BJ (cell line): ENCODE measurements at regions of chr7 and their contacts with region 1.

Region 1: DNA sequence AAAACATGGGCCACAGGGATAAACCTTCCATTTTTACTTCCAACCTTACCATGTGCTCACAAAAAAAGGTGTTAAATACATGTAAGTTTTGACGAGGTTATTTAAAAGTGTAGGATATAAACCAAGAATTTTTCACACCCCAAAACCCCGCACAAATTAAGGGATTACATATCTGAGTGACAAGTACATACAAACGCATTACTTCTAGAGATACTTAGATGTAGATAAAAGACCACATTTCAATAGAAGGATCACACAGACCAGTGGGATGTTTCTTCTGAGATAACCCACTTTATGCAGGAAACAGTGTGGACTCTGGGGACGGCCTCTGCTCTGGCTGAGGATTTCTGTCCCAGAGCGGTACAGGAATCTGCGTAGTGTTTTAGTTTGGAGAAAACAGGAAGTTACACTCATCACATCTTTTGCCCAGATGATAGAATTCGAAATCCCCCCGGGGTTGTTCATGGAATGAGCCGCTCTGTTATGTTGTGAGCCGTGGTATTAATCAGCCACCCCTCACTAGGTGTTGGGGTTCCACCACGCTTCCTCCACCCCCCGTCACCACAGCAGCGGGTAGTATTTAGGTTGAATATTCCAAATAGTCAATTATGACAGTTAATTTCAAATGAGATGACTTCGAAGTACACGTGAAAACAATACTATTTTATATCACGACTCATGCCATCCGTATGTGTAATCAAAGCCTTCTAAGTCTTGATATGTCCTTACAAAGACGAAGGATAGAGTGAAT is 1.3 kb upstream of the CUL1 start:
- DNase-seq: no peak
- H3K4me3 ChIP-seq: peak overlapping the region; percentile 87
- H3K27me3 ChIP-seq: no peaks in the 10 kb centered on the region
- CTCF ChIP-seq: no peak

Region 2: GRCh38 chr7:148862481-148862880 is 165.1 kb after region 1 on chr7:
- CTCF ChIA-PET with region 1: no interaction called
- POLR2A ChIA-PET with region 1: interaction called, 18 read pairs
- DNase-seq: no peak
- H3K4me3 ChIP-seq: no peak overlapping the region
- H3K27me3 ChIP-seq: no peaks in the 10 kb centered on the region
- CTCF ChIP-seq: no peak